CD4-positive, alpha-beta memory T cell (primary cell): ENCODE measurements at regions of chr13 and their contacts with region 1.

Region 1: DNA sequence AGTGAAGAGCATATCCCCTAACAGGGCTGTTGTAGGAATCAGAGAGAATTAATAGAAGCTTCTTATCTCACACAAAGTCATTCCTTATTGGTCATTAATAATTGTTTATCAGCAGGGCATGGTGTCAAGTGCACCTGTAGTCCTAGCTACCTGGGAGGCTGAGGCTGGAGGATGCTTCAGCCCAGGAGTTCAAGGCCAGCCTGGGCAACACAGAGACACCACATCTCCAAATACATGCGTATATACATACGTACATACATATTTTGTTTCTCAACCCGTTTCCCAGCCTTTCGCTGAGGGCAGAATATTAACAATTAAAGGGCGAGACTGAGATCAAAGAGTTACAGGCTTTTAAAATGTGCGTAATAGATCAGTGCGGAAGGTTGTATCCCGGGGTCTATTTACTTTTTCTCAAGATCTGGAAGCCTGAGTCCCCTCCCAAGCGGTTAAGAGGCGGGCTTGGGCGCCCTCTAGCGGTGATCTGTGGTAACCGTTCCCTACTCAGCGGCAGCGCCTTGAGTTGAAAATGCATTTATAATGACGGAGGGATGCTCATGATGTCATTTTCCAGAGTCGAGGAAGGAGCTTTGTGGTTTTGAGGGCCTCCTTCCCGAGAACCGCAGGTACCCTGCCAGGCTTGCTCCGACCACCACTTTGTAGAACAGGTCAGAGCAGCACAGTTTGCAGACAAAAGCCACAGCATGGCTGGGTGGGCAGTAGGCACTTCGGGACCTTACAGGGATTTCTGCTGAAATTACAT is 169.6 kb upstream of the GPR12 start:
- DNase-seq: peak in 4 of 5 donors; percentile 48 to 57 (median 52)
- H3K4me3 ChIP-seq: no peak overlapping the region
- H3K4me3 Mint-ChIP-seq: no peak overlapping the region
- H3K27ac ChIP-seq: no peak overlapping the region
- H3K27ac Mint-ChIP-seq: no peak overlapping the region
- H3K4me1 ChIP-seq: no peaks in the 10 kb centered on the region
- H3K4me1 Mint-ChIP-seq: peaks cover 0 to 3% (median 0%) of the 10 kb centered on the region in 4 donors
- H3K27me3 ChIP-seq: no peaks in the 10 kb centered on the region
- H3K27me3 Mint-ChIP-seq: peaks cover 4% of the 10 kb centered on the region in 2 donors

Region 2: GRCh38 chr13:26707122-26708006 is 222.8 kb before region 1 on chr13:
- CTCF ChIA-PET with region 1: interaction called, 32 read pairs
- POLR2A ChIA-PET with region 1: no interaction called
- intact Hi-C with region 1: no loop called
- DNase-seq: peak in 4 of 5 donors; percentile 30 to 48 (median 42)
- H3K4me3 ChIP-seq: no peak overlapping the region
- H3K4me3 Mint-ChIP-seq: no peak overlapping the region
- H3K27ac ChIP-seq: no peak overlapping the region
- H3K27ac Mint-ChIP-seq: no peak overlapping the region
- H3K4me1 ChIP-seq: no peaks in the 10 kb centered on the region
- H3K4me1 Mint-ChIP-seq: peaks cover 0 to 4% (median 0%) of the 10 kb centered on the region in 4 donors
- H3K27me3 ChIP-seq: no peaks in the 10 kb centered on the region
- H3K27me3 Mint-ChIP-seq: peaks cover 2% of the 10 kb centered on the region in 2 donors

Region 3: DNA sequence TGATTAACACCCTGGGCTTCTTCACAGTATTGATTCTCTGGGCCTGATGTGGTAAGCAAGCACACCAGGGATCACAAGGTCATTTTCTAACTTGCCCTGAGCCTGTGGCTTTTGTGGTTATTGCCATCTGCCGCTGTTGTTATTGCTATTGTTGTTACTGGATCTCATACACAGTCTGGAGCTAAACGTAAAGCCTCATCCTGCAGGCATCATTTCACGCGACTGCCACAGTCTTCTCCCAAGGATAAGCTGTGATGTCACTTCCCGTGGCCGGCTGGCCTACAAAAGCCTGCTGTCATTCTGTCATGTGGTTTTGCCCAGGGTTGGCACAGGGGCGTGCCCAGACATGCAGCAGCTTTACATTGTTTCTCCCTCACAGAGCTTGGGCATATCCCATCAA is 15.5 kb before region 1 on chr13:
- CTCF ChIA-PET with region 1: interaction called, 30 read pairs
- POLR2A ChIA-PET with region 1: no interaction called
- intact Hi-C with region 1: no loop called
- DNase-seq: no peak
- H3K4me3 ChIP-seq: no peak overlapping the region
- H3K4me3 Mint-ChIP-seq: peak overlapping the region in 1 of 8 donors; percentile 5
- H3K27ac ChIP-seq: no peak overlapping the region
- H3K27ac Mint-ChIP-seq: peak overlapping the region in 1 of 7 donors; percentile 29
- H3K4me1 ChIP-seq: peaks cover 8% of the 10 kb centered on the region
- H3K4me1 Mint-ChIP-seq: peaks cover 7 to 9% (median 8%) of the 10 kb centered on the region in 4 donors
- H3K27me3 ChIP-seq: no peaks in the 10 kb centered on the region
- H3K27me3 Mint-ChIP-seq: peaks cover 2 to 13% of the 10 kb centered on the region in 2 donors

Region 4: GRCh38 chr13:26941345-26942174 is 11.4 kb after region 1 on chr13:
- CTCF ChIA-PET with region 1: interaction called, 13 read pairs
- POLR2A ChIA-PET with region 1: no interaction called
- intact Hi-C with region 1: no loop called
- DNase-seq: no peak
- H3K4me3 ChIP-seq: no peak overlapping the region
- H3K4me3 Mint-ChIP-seq: no peak overlapping the region
- H3K27ac ChIP-seq: no peak overlapping the region
- H3K27ac Mint-ChIP-seq: no peak overlapping the region
- H3K4me1 ChIP-seq: no peaks in the 10 kb centered on the region
- H3K4me1 Mint-ChIP-seq: no peaks in the 10 kb centered on the region
- H3K27me3 ChIP-seq: no peaks in the 10 kb centered on the region
- H3K27me3 Mint-ChIP-seq: peaks cover 4 to 10% of the 10 kb centered on the region in 2 donors